ENCODE measurements at regions of chr16 and their contacts with region 1.

Region 1: DNA sequence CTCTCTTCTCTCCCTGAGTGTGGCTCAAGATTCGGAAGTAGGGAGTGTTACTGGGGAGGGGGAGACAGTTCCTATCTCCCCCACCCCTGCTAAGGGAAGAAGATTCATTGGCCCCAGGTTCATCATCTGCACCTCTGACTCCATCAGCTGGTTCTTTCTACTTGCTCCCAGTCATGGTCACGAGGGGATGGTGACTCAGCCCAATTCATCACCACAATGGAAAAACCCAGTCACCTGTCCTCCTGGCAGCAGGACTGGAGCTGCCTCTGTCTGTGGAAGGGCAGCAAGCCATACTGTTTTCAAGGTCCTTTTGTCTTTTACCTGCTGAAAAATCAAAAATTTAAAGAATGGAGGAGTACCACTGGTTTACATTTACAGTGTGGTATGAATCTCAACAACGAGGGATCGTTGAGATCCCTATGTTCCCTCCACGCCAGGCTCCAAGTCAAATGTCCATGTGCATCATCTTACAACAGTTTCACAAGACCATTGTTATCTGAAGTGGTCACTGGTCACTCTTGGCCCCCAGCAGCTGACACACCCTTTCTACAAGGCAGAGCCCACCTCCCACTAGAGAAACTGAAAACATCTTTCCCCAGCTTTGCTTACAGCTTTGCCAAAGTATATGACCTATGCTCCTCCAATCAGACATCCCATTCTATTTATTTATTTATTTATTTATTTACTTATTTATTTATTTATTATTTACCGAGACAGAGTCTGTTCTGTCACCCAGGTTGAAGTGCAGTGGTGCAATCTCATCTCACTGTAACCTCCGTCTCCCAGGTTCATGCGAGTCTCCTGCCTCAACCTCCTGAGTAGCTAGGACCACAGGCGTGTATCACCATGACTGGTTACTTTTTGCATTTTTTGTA is 40.4 kb upstream of the NDRG4 start:
- DNase-seq: peak; percentile 87
- H3K4me3 Mint-ChIP-seq: no peak overlapping the region
- H3K27ac Mint-ChIP-seq: no peak overlapping the region
- H3K4me1 Mint-ChIP-seq: peaks cover 8% of the 10 kb centered on the region
- H3K27me3 Mint-ChIP-seq: peaks cover 25% of the 10 kb centered on the region

Region 2: DNA sequence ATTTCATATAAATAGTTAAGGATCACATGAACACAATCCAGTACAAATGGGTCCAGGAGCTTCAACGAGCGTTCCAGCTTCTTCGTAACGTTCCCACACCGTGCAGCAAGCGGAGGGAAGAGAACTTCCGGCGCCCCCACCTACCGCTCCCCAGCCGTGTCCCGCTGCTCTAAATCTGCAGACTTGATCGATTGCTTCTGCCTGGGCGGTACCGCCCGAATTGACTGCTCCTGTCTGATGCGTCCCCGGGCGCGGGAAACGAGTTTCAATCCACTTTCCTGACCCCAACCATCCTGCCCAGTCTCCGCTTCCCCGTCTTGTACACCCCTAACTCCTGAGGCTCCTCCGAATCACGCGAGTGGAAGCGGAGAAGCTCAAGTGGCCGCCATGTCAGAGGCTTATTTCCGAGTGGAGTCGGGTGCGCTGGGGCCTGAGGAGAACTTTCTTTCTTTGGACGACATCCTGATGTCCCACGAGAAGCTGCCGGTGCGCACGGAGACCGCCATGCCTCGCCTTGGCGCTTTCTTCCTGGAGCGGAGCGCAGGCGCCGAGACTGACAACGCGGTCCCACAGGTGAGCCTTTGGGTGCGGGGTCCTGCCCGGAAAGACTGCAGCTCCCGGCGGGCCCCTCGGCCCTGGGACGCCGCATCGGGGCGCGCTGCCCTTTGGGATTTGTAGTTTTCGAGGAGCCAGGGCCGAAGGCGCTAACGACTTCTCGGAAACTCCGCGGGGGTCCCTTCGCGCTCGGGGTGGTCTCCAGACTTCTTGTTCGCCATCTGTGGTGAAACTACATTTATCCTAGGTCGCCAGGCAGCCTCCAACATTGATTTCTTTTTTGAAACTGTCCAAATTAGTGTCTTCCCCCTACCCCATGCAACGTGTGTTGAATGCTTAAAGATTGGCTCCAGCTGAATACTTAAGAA is 67.1 kb before region 1 on chr16 and contains the start of gene GINS3:
- CTCF ChIA-PET with region 1: no interaction called
- intact Hi-C with region 1: loop called (anchors 1 kb)
- DNase-seq: peak; percentile 94
- H3K4me3 Mint-ChIP-seq: peak within 1 kb of the TSS; percentile 98
- H3K27ac Mint-ChIP-seq: peak within 1 kb of the TSS; percentile 99
- H3K4me1 Mint-ChIP-seq: peaks cover 16% of the 10 kb centered on the region
- H3K27me3 Mint-ChIP-seq: no peaks in the 10 kb centered on the region
- total RNA-seq, gene GINS3: 19.2 to 20.3 TPM

Region 3: DNA sequence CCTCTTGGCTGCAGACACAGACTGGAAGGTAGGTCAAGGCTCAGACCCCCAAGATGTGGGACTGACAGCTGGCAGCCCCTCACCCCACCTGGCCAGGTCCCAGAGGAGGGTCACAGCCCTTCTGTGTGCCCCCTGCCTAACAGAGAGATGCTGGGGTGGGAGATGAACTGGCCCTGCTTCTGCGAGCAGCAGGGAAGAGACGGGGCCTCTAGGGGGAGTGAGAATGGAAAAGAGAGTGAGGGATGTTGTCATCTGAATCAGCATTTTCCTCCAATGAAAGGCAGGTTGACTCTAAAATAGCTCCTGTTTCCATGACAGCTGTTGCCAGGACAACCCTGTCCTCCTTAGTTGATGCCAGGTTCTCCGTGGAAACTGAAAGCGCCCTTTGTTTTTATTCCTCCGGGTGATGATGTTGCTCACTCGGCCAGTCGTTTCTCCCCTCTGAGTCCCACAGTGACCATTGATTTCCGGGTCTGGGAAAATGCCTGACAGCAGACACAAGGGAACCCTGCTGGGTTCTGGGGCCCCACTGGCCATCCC is 35.5 kb after region 1 on chr16:
- CTCF ChIA-PET with region 1: interaction called, 3 read pairs
- intact Hi-C with region 1: loop called (anchors 2 kb)
- DNase-seq: peak; percentile 94
- H3K4me3 Mint-ChIP-seq: no peak overlapping the region
- H3K27ac Mint-ChIP-seq: no peak overlapping the region
- H3K4me1 Mint-ChIP-seq: peaks cover 9% of the 10 kb centered on the region
- H3K27me3 Mint-ChIP-seq: no peaks in the 10 kb centered on the region

Region 4: GRCh38 chr16:58533751-58534470 is 74.3 kb after region 1 on chr16:
- CTCF ChIA-PET with region 1: no interaction called
- intact Hi-C with region 1: no loop called
- DNase-seq: no peak
- H3K4me3 Mint-ChIP-seq: no peak overlapping the region
- H3K27ac Mint-ChIP-seq: no peak overlapping the region
- H3K4me1 Mint-ChIP-seq: no peaks in the 10 kb centered on the region
- H3K27me3 Mint-ChIP-seq: no peaks in the 10 kb centered on the region